Gastrocnemius medialis (tissue), 4 donors: ENCODE measurements at regions of chr13 and their contacts with region 1.

Region 1: DNA sequence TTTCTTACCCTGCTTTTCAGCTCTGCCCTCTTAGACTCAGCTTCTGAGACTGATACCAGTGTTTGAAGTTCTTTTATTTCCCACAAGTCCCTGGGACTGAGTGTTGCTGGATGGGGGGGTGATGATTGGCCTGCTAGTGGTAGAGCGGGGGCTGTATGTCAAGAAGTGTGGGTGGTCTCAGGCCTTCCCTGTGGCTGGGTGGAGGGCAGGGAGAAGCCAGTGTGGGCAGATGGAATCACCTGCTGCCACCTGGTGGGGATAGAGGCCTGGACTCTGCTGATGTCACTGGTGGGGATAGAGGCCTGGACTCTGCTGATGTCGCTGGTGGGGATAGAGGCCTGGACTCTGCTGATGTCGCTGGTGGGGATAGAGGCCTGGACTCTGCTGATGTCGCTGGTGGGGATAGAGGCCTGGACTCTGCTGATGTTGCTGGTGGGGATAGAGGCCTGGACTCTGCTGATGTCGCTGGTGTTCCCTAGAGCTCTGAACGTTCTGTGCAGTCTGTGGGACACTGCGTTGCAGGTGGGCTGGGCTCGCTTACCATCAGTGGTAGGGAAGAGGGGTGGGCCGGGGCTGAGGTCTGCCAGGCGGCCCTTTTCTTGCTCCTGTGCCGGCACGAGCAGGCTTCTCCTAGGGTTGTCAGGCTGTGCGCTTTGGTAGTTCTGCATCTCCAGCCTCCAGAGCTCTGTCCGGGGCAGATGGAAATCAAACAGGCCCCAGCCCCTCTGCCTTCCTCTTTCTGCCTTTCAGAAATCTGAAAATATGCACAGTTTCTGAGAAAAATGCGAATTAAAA is 101.3 kb downstream of the ARHGEF7 start:
- DNase-seq: peak; percentile 26 to 73
- ATAC-seq: peak; percentile 53 to 68
- H3K4me3 ChIP-seq: no peak overlapping the region
- H3K27ac ChIP-seq: peak overlapping the region; percentile 81 to 83 (median 82)
- H3K4me1 ChIP-seq: peaks cover 79 to 82% of the 10 kb centered on the region in 2 donors
- H3K27me3 ChIP-seq: no peaks in the 10 kb centered on the region
- CTCF ChIP-seq: peak; percentile 26 to 71 (median 56)
- POLR2A ChIP-seq: no peak

Region 2: GRCh38 chr13:111058776-111059506 is 157.4 kb before region 1 on chr13:
- in situ Hi-C with region 1: loop called in 2 of 4 experiments (anchors 5 to 10 kb)
- intact Hi-C with region 1: no loop called
- DNase-seq: no peak
- ATAC-seq: no peak
- H3K4me3 ChIP-seq: no peak overlapping the region
- H3K27ac ChIP-seq: no peak overlapping the region
- H3K4me1 ChIP-seq: peaks cover 0 to 12% of the 10 kb centered on the region in 2 donors
- H3K27me3 ChIP-seq: no peaks in the 10 kb centered on the region
- CTCF ChIP-seq: no peak
- POLR2A ChIP-seq: no peak

Region 3: GRCh38 chr13:111080642-111081041 is 135.7 kb before region 1 on chr13:
- in situ Hi-C with region 1: no loop called
- intact Hi-C with region 1: no loop called
- DNase-seq: no peak
- ATAC-seq: no peak
- H3K4me3 ChIP-seq: no peak overlapping the region
- H3K27ac ChIP-seq: no peak overlapping the region
- H3K4me1 ChIP-seq: no peaks in the 10 kb centered on the region
- H3K27me3 ChIP-seq: no peaks in the 10 kb centered on the region
- CTCF ChIP-seq: no peak
- POLR2A ChIP-seq: no peak

Region 4: DNA sequence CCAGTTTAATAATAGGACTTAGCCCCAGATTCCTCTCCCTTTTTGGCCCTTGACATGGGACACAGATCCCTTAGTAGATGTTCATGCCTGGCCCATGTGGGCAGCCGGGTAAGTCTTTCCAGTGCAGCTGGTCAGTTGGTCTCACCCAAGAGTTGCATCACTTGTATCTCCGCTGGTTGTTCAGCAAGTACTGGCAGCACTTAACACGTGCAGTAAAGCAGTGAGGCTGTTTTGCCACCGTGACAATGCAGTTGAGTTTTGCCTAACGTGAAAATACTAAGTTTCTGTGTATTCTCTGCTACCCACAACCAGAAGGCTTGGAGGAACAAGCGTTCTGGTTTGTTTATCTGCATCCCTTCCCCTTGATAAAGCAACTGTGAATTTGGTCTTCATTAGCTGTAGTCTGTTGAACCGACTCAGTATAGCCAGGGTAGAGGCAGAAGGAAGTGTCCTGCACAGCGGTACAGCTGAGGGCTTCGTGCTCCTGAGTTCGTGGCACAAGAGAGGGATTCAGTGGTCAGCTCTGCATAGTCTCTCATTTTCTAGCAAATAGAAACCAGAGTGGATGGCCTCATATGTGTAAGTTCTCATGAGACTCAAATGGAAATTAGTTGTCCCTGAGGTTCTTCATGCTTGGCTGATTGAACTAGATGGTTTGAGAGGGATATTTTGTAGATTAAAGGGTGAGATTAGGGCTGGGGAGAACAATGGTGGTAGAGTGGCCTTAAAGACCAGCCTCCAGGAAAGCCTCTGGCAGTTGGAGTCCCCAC is 50.9 kb before region 1 on chr13:
- in situ Hi-C with region 1: loop called in 1 of 4 experiments (anchors 10 kb)
- intact Hi-C with region 1: no loop called
- DNase-seq: peak; percentile 92 to 96
- ATAC-seq: peak; percentile 95 to 99
- H3K4me3 ChIP-seq: peak overlapping the region in 1 of 4 donors; percentile 12
- H3K27ac ChIP-seq: peak overlapping the region; percentile 85 to 93 (median 90)
- H3K4me1 ChIP-seq: peaks cover 73 to 79% of the 10 kb centered on the region in 2 donors
- H3K27me3 ChIP-seq: no peaks in the 10 kb centered on the region
- CTCF ChIP-seq: no peak
- POLR2A ChIP-seq: peak; percentile 38 to 42

Region 5: GRCh38 chr13:111281751-111282311 is 65.5 kb after region 1 on chr13:
- in situ Hi-C with region 1: no loop called
- intact Hi-C with region 1: no loop called
- DNase-seq: no peak
- ATAC-seq: peak; percentile 32 to 55
- H3K4me3 ChIP-seq: no peak overlapping the region
- H3K27ac ChIP-seq: peak overlapping the region; percentile 78 to 86 (median 82)
- H3K4me1 ChIP-seq: peaks cover 29 to 36% of the 10 kb centered on the region in 2 donors
- H3K27me3 ChIP-seq: no peaks in the 10 kb centered on the region
- CTCF ChIP-seq: no peak
- POLR2A ChIP-seq: no peak